ENCODE measurements at regions of chrX and their contacts with region 1.

Region 1: DNA sequence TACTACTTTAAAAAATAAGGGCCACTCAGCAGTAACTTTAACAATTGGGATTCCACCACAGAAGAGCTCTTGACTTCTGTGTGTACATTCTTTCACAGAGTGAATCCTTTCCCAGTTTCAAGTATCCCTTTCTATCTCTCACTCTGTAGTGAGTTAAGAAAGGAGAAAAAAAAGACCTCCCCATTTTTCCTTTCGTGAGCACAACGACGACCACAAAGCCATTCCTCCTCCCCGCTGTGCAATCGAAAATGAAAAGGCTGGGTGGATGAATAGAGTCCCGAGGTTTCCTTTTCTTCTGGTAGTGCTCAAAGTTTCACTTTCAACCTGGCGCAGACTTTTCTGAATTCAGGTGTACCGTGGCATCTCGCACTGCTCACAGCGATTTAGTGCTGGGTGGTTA is 58.0 kb downstream of the TAB3 start:
- DNase-seq: peak in 8 of 14 experiments; percentile 0 to 40 (median 26)
- ATAC-seq: peak; percentile 57
- H3K4me3 ChIP-seq: peak overlapping the region; percentile 22
- H3K4me3 Mint-ChIP-seq: peak overlapping the region; percentile 86
- H3K27ac ChIP-seq: peak overlapping the region; percentile 21 to 44
- H3K27ac Mint-ChIP-seq: peak overlapping the region; percentile 87
- H3K4me1 ChIP-seq: peaks cover 3% of the 10 kb centered on the region
- H3K4me1 Mint-ChIP-seq: peaks cover 37% of the 10 kb centered on the region
- H3K27me3 ChIP-seq: no peaks in the 10 kb centered on the region
- H3K27me3 Mint-ChIP-seq: no peaks in the 10 kb centered on the region
- CTCF ChIP-seq: no peak

Region 2: GRCh38 chrX:30652527-30653414 is 178.3 kb before region 1 on chrX:
- CTCF ChIA-PET with region 1: no interaction called
- POLR2A ChIA-PET with region 1: no interaction called
- intact Hi-C with region 1: loop called in 1 of 2 experiments (anchors 10 kb)
- DNase-seq: peak; percentile 72 to 93 (median 86)
- ATAC-seq: peak; percentile 84
- H3K4me3 ChIP-seq: peak overlapping the region; percentile 89
- H3K4me3 Mint-ChIP-seq: peak overlapping the region; percentile 96
- H3K27ac ChIP-seq: peak overlapping the region; percentile 56 to 69
- H3K27ac Mint-ChIP-seq: peak overlapping the region; percentile 96
- H3K4me1 ChIP-seq: peaks cover 20% of the 10 kb centered on the region
- H3K4me1 Mint-ChIP-seq: peaks cover 45% of the 10 kb centered on the region
- H3K27me3 ChIP-seq: no peaks in the 10 kb centered on the region
- H3K27me3 Mint-ChIP-seq: no peaks in the 10 kb centered on the region
- CTCF ChIP-seq: no peak

Region 3: GRCh38 chrX:30881797-30882196 is 50.7 kb after region 1 on chrX:
- CTCF ChIA-PET with region 1: no interaction called
- POLR2A ChIA-PET with region 1: no interaction called
- intact Hi-C with region 1: loop called (anchors 5 kb)
- DNase-seq: no peak
- ATAC-seq: no peak
- H3K4me3 ChIP-seq: no peak overlapping the region
- H3K4me3 Mint-ChIP-seq: no peak overlapping the region
- H3K27ac ChIP-seq: no peak overlapping the region
- H3K27ac Mint-ChIP-seq: no peak overlapping the region
- H3K4me1 ChIP-seq: peaks cover 5% of the 10 kb centered on the region
- H3K4me1 Mint-ChIP-seq: peaks cover 79% of the 10 kb centered on the region
- H3K27me3 ChIP-seq: no peaks in the 10 kb centered on the region
- H3K27me3 Mint-ChIP-seq: no peaks in the 10 kb centered on the region
- CTCF ChIP-seq: no peak

Region 4: GRCh38 chrX:31223817-31224216 is 392.7 kb after region 1 on chrX:
- CTCF ChIA-PET with region 1: no interaction called
- POLR2A ChIA-PET with region 1: no interaction called
- intact Hi-C with region 1: no loop called
- DNase-seq: no peak
- ATAC-seq: no peak
- H3K4me3 ChIP-seq: no peak overlapping the region
- H3K4me3 Mint-ChIP-seq: no peak overlapping the region
- H3K27ac ChIP-seq: no peak overlapping the region
- H3K27ac Mint-ChIP-seq: no peak overlapping the region
- H3K4me1 ChIP-seq: no peaks in the 10 kb centered on the region
- H3K4me1 Mint-ChIP-seq: no peaks in the 10 kb centered on the region
- H3K27me3 ChIP-seq: no peaks in the 10 kb centered on the region
- H3K27me3 Mint-ChIP-seq: no peaks in the 10 kb centered on the region
- CTCF ChIP-seq: no peak